H1 (cell line): ENCODE measurements at regions of chr12 and their contacts with region 1.

Region 1: DNA sequence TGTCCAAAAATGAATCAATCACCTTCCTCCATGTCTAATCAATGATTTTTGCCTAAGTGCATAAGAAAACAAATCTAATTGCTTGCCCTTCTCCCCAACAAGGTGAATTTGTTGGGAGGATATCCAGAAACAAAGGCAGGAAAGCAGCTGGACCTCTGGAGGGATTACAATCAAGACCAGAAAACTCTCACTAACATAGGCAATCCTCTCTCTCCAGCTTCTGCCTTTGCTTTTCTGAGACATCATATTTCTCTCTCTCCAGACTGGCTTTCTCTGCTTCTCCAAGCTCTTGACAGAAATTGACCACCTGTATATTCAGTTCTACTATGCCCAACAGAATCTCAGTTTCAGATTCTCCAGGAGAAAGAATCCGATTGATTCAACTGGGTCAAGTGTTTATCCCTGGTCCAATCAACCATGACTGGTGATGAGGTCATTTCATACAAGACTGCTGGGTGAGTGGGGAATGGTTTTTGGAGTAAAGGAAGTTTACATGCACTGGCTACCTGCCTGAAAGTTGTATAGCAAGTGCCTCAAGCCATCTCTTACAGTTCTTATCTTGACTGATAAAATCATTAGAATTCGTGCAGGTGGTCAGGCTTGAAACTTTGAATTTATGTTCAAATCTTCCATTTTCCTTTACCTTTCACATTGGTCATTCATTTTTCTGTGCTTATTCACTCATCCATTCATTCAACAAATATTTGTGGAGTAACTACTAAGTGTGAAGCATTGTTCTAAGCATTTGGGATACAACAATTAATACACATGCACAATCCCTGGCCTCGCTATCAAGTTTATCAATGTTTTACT is 22.2 kb upstream of the CFAP54 start:
- DNase-seq: no peak
- H3K4me3 ChIP-seq: no peak overlapping the region
- H3K27ac ChIP-seq: no peak overlapping the region
- H3K4me1 ChIP-seq: no peaks in the 10 kb centered on the region
- H3K27me3 ChIP-seq: peaks cover 0 to 1% (median 0%) of the 10 kb centered on the region in 4 experiments; a peak in 1 of 7 replicates
- CTCF ChIP-seq: no peak
- EP300 ChIP-seq: no peak
- POLR2A ChIP-seq: no peak
- RAD21 ChIP-seq: no peak

Region 2: DNA sequence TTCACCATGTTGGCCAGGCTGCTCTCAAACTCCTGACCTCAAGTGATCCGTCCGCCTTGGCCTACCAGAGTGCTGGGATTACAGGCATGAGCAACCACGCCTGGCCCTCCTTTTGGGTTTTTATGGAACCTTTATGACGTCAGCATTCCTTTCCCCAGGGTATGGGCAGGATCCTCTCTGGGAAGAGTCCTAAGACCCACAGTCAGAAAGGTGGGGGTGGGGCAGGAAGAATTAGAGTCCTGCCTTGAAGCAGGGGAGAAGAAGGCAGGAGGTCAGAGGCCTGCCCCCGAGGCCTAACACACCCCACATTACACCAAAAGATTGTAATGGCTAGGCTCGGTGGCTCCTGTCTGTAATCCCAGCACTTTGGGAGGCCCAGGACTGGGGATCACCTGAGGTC is 36.1 kb before region 1 on chr12:
- CTCF ChIA-PET with region 1: no interaction called
- POLR2A ChIA-PET with region 1: no interaction called
- DNase-seq: no peak
- H3K4me3 ChIP-seq: no peak overlapping the region
- H3K27ac ChIP-seq: no peak overlapping the region
- H3K4me1 ChIP-seq: peaks cover 0 to 7% (median 0%) of the 10 kb centered on the region in 4 experiments; a peak in 3 of 7 replicates
- H3K27me3 ChIP-seq: no peaks in the 10 kb centered on the region
- CTCF ChIP-seq: no peak
- EP300 ChIP-seq: no peak
- POLR2A ChIP-seq: no peak
- RAD21 ChIP-seq: no peak

Region 3: GRCh38 chr12:96489103-96490056 is 22.2 kb after region 1 on chr12 and contains the start of gene CFAP54:
- CTCF ChIA-PET with region 1: interaction called, 10 read pairs
- POLR2A ChIA-PET with region 1: no interaction called
- DNase-seq: peak; percentile 53 to 94
- H3K4me3 ChIP-seq: peak within 1 kb of the TSS; percentile 55 to 90 (median 88)
- H3K27ac ChIP-seq: no peak within 1 kb of the TSS
- H3K4me1 ChIP-seq: no peaks in the 10 kb centered on the region; a peak in 1 of 7 replicates
- H3K27me3 ChIP-seq: no peaks in the 10 kb centered on the region; a peak in 1 of 7 replicates
- CTCF ChIP-seq: peak; percentile 71 to 89 (median 89)
- EP300 ChIP-seq: peak in 1 of 2 experiments; percentile 75; a peak in 1 of 3 replicates
- POLR2A ChIP-seq: no peak
- RAD21 ChIP-seq: peak; percentile 54 to 71
- total RNA-seq, gene CFAP54: 0.17 and 0.42 TPM in 2 replicates